Mammary epithelial cell (primary cell): ENCODE measurements at regions of chr7 and their contacts with region 1.

Region 1: GRCh38 chr7:83807774-83808173 is 158.8 kb upstream of the SEMA3E start:
- DNase-seq: no peak
- H3K4me3 ChIP-seq: no peak overlapping the region
- H3K27ac ChIP-seq: no peak overlapping the region
- H3K4me1 ChIP-seq: no peaks in the 10 kb centered on the region
- H3K27me3 ChIP-seq: peaks cover 3% of the 10 kb centered on the region
- CTCF ChIP-seq: no peak

Region 2: GRCh38 chr7:83148776-83149175 is 659.0 kb before region 1 on chr7:
- CTCF ChIA-PET with region 1: interaction called, 21 read pairs
- dilution Hi-C with region 1: no loop called
- in situ Hi-C with region 1: no loop called
- intact Hi-C with region 1: no loop called
- DNase-seq: peak; percentile 54
- H3K4me3 ChIP-seq: no peak overlapping the region
- H3K27ac ChIP-seq: no peak overlapping the region
- H3K4me1 ChIP-seq: peaks cover 17% of the 10 kb centered on the region
- H3K27me3 ChIP-seq: no peaks in the 10 kb centered on the region
- CTCF ChIP-seq: no peak

Region 3: DNA sequence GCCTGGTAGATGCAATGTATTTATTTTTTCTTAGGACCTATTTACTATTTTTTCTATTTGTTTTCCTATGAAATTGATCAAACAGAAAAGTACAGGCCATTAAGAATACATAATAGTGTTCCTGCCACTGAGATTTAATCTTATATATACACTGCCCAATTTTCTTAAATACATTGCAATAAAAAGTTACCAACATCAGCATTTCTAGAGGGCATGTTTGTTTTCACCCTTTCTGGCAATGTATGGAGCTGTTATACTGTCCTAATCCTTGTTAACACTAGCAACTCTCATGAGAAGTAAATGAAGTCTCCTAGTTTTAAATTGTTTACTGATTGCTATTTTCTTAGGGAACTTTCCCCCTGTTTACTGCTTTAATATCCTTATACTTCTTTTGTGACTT is 745.9 kb after region 1 on chr7:
- CTCF ChIA-PET with region 1: no interaction called
- dilution Hi-C with region 1: no loop called
- in situ Hi-C with region 1: no loop called
- intact Hi-C with region 1: no loop called
- DNase-seq: no peak
- H3K4me3 ChIP-seq: no peak overlapping the region
- H3K27ac ChIP-seq: no peak overlapping the region
- H3K4me1 ChIP-seq: no peaks in the 10 kb centered on the region
- H3K27me3 ChIP-seq: no peaks in the 10 kb centered on the region
- CTCF ChIP-seq: no peak